A673 (cell line): ENCODE measurements at regions of chr18 and their contacts with region 1.

Region 1: GRCh38 chr18:250688-251422 is 17.0 kb downstream of the THOC1 start:
- DNase-seq: no peak
- H3K4me3 ChIP-seq: no peak overlapping the region
- H3K27ac ChIP-seq: no peak overlapping the region
- H3K4me1 ChIP-seq: no peaks in the 10 kb centered on the region
- H3K27me3 ChIP-seq: no peaks in the 10 kb centered on the region
- CTCF ChIP-seq: no peak

Region 2: GRCh38 chr18:199768-200167 is 51.1 kb before region 1 on chr18:
- CTCF ChIA-PET with region 1: no interaction called
- POLR2A ChIA-PET with region 1: no interaction called
- intact Hi-C with region 1: loop called (anchors 5 kb)
- DNase-seq: no peak
- H3K4me3 ChIP-seq: no peak overlapping the region
- H3K27ac ChIP-seq: no peak overlapping the region
- H3K4me1 ChIP-seq: no peaks in the 10 kb centered on the region
- H3K27me3 ChIP-seq: no peaks in the 10 kb centered on the region
- CTCF ChIP-seq: no peak

Region 3: DNA sequence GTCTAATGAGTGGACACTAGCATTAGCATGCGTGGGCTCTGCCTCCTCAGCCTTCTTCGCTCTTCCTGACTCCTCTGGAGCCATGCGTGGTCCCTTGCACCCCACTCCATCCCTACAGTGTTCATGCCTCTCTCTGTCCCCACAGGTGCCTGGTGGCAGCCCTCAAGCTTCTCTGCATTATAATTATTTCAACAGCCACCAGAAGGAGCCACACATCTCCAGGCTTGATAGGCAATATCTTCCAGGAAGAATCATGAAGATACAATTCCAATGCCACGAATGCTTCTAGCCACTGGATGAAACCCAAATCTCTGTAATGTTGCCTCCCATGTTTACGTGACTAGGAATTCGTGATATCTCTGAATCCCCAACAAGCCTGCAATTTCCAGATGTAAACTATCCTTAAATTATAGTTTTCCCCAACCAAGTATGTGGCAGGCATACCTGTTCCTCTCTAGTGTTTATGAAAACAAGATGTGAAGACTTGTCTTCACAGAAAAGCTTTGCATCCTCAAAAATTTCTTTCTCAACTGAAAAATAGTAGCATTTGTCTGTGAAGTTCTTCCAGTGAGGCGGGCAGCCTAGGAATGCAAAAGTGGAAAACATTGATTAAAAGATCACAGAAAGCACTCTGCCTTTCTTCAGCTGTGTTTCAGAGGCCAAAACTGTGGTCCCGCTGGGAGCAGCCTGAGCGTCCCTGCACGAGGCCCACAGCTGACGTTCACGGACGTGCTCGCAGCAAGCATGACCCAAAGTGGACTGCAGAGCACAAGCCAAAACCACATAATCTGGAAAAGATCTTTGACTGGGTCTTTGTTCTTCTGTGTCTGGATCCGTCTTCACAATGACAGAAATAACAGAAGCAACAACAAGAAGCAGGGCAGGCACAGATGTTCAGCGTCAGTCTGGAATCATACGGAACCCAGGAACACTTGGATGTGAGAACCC is 82.0 kb after region 1 on chr18:
- CTCF ChIA-PET with region 1: no interaction called
- POLR2A ChIA-PET with region 1: no interaction called
- intact Hi-C with region 1: no loop called
- DNase-seq: no peak
- H3K4me3 ChIP-seq: no peak overlapping the region
- H3K27ac ChIP-seq: no peak overlapping the region
- H3K4me1 ChIP-seq: no peaks in the 10 kb centered on the region
- H3K27me3 ChIP-seq: no peaks in the 10 kb centered on the region
- CTCF ChIP-seq: no peak